Sigmoid colon (tissue), 7 donors: ENCODE measurements at regions of chr11 and their contacts with region 1.

Region 1: DNA sequence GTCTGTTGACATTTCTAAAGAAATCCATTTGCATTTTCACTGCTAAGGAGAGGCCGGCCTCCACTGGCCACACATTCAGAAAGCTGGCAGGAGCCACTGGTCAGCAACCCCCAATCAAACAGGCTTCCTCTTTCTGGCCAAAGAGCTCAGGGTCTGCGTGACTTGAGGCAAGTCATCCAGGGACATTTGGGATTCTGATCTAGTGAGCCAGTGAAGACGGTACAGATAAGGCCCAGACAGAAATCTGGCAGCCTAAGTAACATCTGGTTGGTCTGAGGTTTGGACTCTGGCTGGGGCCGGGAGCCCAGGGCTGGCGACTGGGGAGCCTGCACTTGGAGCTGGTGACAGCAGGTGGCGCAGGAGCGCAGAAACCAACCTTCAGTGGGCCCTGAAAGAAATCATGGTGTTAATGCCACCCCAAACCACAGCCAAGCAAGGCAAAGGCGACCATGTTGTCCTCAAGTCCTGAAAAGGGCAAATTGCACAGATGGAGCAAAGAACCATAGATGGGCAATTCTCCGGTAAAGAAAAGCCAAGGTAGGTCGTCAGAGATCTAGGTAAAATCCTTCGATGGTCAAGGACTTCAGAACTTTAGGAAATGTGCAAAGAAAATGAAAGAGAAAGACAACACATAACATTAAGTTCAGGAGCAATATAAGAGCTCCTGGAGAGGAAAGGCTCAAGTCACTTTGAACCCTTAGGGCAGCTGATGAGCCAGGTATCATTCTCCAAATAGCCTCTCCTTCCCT is 99.4 kb upstream of the BLID start:
- DNase-seq: peak; percentile 83
- H3K4me3 ChIP-seq: no peak overlapping the region
- H3K27ac ChIP-seq: peak overlapping the region in 1 of 4 donors; percentile 35
- H3K4me1 ChIP-seq: peaks cover 0 to 20% (median 8%) of the 10 kb centered on the region in 4 donors
- H3K27me3 ChIP-seq: no peaks in the 10 kb centered on the region
- CTCF ChIP-seq: peak; percentile 71 to 90 (median 78)
- EP300 ChIP-seq: no peak
- POLR2A ChIP-seq: no peak

Region 2: GRCh38 chr11:121864660-121865059 is 350.8 kb before region 1 on chr11:
- intact Hi-C with region 1: no loop called
- DNase-seq: no peak
- H3K4me3 ChIP-seq: no peak overlapping the region
- H3K27ac ChIP-seq: no peak overlapping the region
- H3K4me1 ChIP-seq: peaks cover 0 to 12% (median 4%) of the 10 kb centered on the region in 4 donors
- H3K27me3 ChIP-seq: no peaks in the 10 kb centered on the region
- CTCF ChIP-seq: no peak
- EP300 ChIP-seq: no peak
- POLR2A ChIP-seq: no peak

Region 3: GRCh38 chr11:122439911-122440810 is 224.7 kb after region 1 on chr11:
- intact Hi-C with region 1: loop called (anchors 5 kb)
- DNase-seq: peak; percentile 64
- H3K4me3 ChIP-seq: peak overlapping the region; percentile 32 to 60 (median 52)
- H3K27ac ChIP-seq: peak overlapping the region; percentile 52 to 68 (median 61)
- H3K4me1 ChIP-seq: peaks cover 0 to 18% (median 12%) of the 10 kb centered on the region in 4 donors
- H3K27me3 ChIP-seq: no peaks in the 10 kb centered on the region
- CTCF ChIP-seq: no peak
- EP300 ChIP-seq: peak in 1 of 4 donors; percentile 25
- POLR2A ChIP-seq: no peak